ENCODE measurements at regions of chr5 and their contacts with region 1.

Region 1: DNA sequence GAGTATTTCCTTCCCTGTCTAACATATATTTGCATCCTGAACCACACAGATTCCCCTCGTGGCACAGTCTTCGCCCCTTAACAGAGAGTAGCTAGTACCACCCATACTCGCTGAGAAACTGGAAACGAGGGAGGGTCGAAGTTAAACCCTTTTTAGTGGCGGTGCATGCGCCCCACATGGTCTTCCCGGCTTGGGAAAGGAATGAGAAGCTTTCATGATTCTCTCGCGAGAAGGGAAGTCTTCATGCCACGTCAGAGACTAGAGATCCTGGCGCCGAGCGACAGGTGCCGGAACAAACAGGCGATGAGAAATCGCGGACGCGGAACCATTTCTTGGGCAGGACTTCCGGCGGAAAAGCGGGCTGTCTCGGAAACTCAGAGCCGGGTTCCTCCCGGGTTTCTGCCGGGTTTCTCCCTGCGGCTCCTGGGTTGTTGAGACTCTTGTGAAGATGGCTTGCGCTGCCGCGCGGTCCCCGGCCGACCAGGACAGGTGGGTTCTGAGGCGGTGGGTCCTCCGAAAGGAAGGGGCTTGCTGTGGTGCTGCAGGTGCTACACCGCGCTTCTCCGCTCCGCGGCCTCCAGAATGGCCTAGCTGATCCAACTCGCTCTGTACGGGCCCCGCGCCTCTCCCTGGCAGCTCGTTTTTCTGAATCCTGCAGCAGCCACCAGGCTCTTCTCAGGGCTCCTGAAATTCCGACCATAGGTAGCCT is at the start of gene SRP19:
- DNase-seq: peak; percentile 93
- H3K4me3 ChIP-seq: peak within 1 kb of the TSS; percentile 87
- H3K27ac ChIP-seq: peak within 1 kb of the TSS; percentile 90
- H3K4me1 ChIP-seq: peaks cover 40% of the 10 kb centered on the region
- H3K27me3 ChIP-seq: no peaks in the 10 kb centered on the region
- CTCF ChIP-seq: no peak
- total RNA-seq, gene SRP19: 31.6 TPM

Region 2: DNA sequence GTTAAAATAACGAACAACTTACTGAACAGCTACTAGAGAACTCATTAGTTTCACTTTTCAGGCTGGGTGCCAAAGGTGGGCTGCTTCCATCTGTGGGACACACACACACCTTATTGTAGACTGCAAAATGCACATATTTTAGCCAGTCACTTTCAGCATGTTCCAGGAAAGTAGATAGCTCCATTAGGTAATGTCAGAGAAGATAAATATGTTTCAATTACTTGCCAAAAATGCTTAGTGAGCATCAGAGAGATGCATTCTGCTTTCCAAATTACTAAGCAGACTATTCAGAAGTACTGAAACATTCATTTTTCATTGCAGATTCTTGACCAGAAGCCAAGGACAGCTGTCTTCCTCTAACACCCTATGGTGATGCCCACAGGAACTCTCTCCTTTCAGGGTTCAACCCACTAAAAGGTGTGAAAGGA is 179.6 kb before region 1 on chr5:
- intact Hi-C with region 1: no loop called
- DNase-seq: no peak
- H3K4me3 ChIP-seq: no peak overlapping the region
- H3K27ac ChIP-seq: no peak overlapping the region
- H3K4me1 ChIP-seq: peaks cover 38% of the 10 kb centered on the region
- H3K27me3 ChIP-seq: peaks cover 3% of the 10 kb centered on the region
- CTCF ChIP-seq: no peak

Region 3: GRCh38 chr5:112917453-112917995 is 56.4 kb after region 1 on chr5:
- intact Hi-C with region 1: loop called (anchors 10 kb)
- DNase-seq: no peak
- H3K4me3 ChIP-seq: no peak overlapping the region
- H3K27ac ChIP-seq: peak overlapping the region; percentile 61
- H3K4me1 ChIP-seq: peaks cover 98% of the 10 kb centered on the region
- H3K27me3 ChIP-seq: no peaks in the 10 kb centered on the region
- CTCF ChIP-seq: no peak

Region 4: GRCh38 chr5:112976432-112977309 is 115.6 kb after region 1 on chr5 and contains the start of gene DCP2:
- intact Hi-C with region 1: loop called (anchors 10 kb)
- DNase-seq: peak; percentile 94
- H3K4me3 ChIP-seq: peak within 1 kb of the TSS; percentile 92
- H3K27ac ChIP-seq: peak within 1 kb of the TSS; percentile 95
- H3K4me1 ChIP-seq: peaks cover 56% of the 10 kb centered on the region
- H3K27me3 ChIP-seq: no peaks in the 10 kb centered on the region
- CTCF ChIP-seq: no peak
- total RNA-seq, gene DCP2: 19.2 TPM